ENCODE measurements at regions of chr19 and their contacts with region 1.

Region 1: GRCh38 chr19:44689056-44689895 is 9.7 kb upstream of the CEACAM16 start:
- DNase-seq: peak; percentile 60 to 76
- H3K4me3 ChIP-seq: no peak overlapping the region
- H3K27ac ChIP-seq: peak overlapping the region; percentile 100
- H3K4me1 ChIP-seq: peaks cover 83% of the 10 kb centered on the region
- H3K27me3 ChIP-seq: no peaks in the 10 kb centered on the region
- CTCF ChIP-seq: peak; percentile 98

Region 2: GRCh38 chr19:44512326-44513298 is 176.7 kb before region 1 on chr19:
- CTCF ChIA-PET with region 1: no interaction called
- POLR2A ChIA-PET with region 1: interaction called, 11 read pairs
- intact Hi-C with region 1: no loop called
- DNase-seq: peak; percentile 50 to 73
- H3K4me3 ChIP-seq: no peak overlapping the region
- H3K27ac ChIP-seq: no peak overlapping the region
- H3K4me1 ChIP-seq: no peaks in the 10 kb centered on the region; the same call in 1 of the 2 replicates
- H3K27me3 ChIP-seq: peaks cover 10% of the 10 kb centered on the region; the same call in 1 of the 2 replicates
- CTCF ChIP-seq: peak; percentile 77

Region 3: DNA sequence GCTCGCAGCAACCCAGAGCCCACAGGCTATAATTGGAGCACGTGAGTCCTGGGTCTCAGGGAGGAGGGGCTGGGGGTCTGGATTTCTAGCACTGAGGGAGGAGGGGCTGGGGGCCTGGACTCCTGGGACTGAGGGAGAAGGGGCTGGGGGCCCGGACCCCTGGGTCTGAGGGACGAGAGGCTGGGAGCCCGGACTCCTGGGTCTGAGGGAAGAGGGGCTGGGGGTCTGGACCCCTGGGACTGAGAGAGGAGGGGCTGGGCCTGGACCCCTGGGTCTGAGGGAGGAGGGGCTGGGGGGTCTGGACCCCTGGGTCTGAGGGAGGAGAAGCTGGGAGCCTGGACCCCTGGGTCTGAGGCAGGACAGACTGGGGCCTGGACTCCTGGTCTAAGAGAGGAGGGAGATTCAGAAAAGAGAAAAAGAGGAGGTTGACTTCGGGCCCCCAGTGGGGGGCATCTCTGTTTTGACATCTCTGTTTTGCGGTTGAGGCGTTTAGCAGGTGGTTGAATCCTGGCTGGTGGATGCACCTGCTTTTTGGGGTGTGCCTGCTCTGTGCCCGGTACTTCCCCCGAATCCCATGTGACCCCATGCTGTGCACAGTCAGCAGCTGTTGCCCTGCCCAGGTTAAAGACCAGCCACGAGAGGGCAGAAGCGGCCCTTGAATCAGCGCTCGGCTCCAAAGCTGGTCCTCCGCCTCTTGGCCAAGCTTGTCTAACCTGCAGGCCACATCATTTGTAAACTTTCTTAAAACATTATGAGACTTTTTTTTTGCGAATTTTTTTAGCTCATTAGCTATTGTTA is 35.1 kb before region 1 on chr19:
- CTCF ChIA-PET with region 1: interaction called, 5 read pairs
- POLR2A ChIA-PET with region 1: no interaction called
- intact Hi-C with region 1: loop called (anchors 2 kb)
- DNase-seq: peak; percentile 76 to 84
- H3K4me3 ChIP-seq: no peak overlapping the region
- H3K27ac ChIP-seq: peak overlapping the region; percentile 33
- H3K4me1 ChIP-seq: peaks cover 8% of the 10 kb centered on the region; the same call in 1 of the 2 replicates
- H3K27me3 ChIP-seq: no peaks in the 10 kb centered on the region
- CTCF ChIP-seq: peak; percentile 77

Region 4: GRCh38 chr19:44718441-44719261 is 29.4 kb after region 1 on chr19:
- CTCF ChIA-PET with region 1: interaction called, 12 read pairs
- POLR2A ChIA-PET with region 1: interaction called, 11 read pairs
- intact Hi-C with region 1: no loop called
- DNase-seq: peak; percentile 75 to 79
- H3K4me3 ChIP-seq: peak overlapping the region; percentile 32; the same call in 1 of the 2 replicates
- H3K27ac ChIP-seq: peak overlapping the region; percentile 86
- H3K4me1 ChIP-seq: peaks cover 57% of the 10 kb centered on the region
- H3K27me3 ChIP-seq: no peaks in the 10 kb centered on the region
- CTCF ChIP-seq: no peak

Region 5: DNA sequence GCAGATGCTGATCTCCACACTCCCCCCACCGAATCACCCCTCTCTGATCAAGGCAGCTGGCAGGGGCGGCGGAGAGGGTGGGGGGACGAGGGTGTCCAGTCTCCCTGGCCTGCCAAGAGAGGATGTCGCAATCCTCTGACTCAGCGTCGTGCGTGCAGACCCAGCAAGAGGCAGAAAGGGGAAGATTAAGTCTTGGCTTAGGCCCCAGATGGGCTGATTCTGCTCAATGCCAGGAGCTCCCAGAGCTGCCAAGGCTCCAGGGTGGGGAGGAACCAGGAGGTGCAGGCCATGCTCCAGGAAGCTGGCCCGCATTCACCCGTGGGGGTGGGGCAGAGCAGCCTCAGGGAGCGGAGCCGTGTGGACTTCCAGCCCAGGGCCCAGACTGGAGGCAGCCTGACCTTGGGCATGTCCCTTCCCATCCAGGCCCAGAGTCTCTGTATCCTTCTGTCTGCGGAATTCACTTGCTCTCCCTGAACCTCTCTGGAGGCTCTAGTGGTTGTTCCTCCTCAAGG is 52.6 kb after region 1 on chr19:
- CTCF ChIA-PET with region 1: interaction called, 16 read pairs
- POLR2A ChIA-PET with region 1: no interaction called
- intact Hi-C with region 1: loop called (anchors 1 kb)
- DNase-seq: peak; percentile 97 to 99
- H3K4me3 ChIP-seq: peak overlapping the region; percentile 44; the same call in 1 of the 2 replicates
- H3K27ac ChIP-seq: peak overlapping the region; percentile 99
- H3K4me1 ChIP-seq: peaks cover 80% of the 10 kb centered on the region
- H3K27me3 ChIP-seq: no peaks in the 10 kb centered on the region
- CTCF ChIP-seq: no peak